ENCODE measurements at regions of chr10 and their contacts with region 1.

Region 1: GRCh38 chr10:101782811-101783735 is at the start of gene NPM3:
- DNase-seq: peak in 1 of 2 experiments; percentile 91
- H3K4me3 ChIP-seq: peak within 1 kb of the TSS; percentile 84 to 91 (median 88)
- H3K27ac ChIP-seq: peak within 1 kb of the TSS; percentile 50; the same call in 1 of the 2 replicates
- H3K4me1 ChIP-seq: peaks cover 4 to 33% (median 20%) of the 10 kb centered on the region in 4 experiments
- H3K27me3 ChIP-seq: peaks cover 5 to 18% (median 13%) of the 10 kb centered on the region in 4 experiments
- CTCF ChIP-seq: no peak
- EP300 ChIP-seq: no peak
- POLR2A ChIP-seq: peak in 1 of 2 experiments; percentile 67; a peak in 2 of 3 replicates
- RAD21 ChIP-seq: no peak
- total RNA-seq, gene NPM3: 175 and 177 TPM in 2 replicates

Region 2: GRCh38 chr10:101602761-101603398 is 180.2 kb before region 1 on chr10:
- CTCF ChIA-PET with region 1: interaction called, 246 read pairs
- POLR2A ChIA-PET with region 1: interaction called, 6 read pairs
- DNase-seq: peak; percentile 81 to 94
- H3K4me3 ChIP-seq: no peak overlapping the region
- H3K27ac ChIP-seq: no peak overlapping the region
- H3K4me1 ChIP-seq: peaks cover 2 to 9% (median 3%) of the 10 kb centered on the region in 4 experiments; a peak in 4 of 7 replicates
- H3K27me3 ChIP-seq: no peaks in the 10 kb centered on the region
- CTCF ChIP-seq: peak; percentile 93 to 100 (median 97)
- EP300 ChIP-seq: no peak
- POLR2A ChIP-seq: no peak
- RAD21 ChIP-seq: peak; percentile 98

Region 3: GRCh38 chr10:101663097-101663496 is 120.0 kb before region 1 on chr10:
- CTCF ChIA-PET with region 1: interaction called, 10 read pairs
- POLR2A ChIA-PET with region 1: no interaction called
- DNase-seq: no peak
- H3K4me3 ChIP-seq: no peak overlapping the region
- H3K27ac ChIP-seq: no peak overlapping the region
- H3K4me1 ChIP-seq: peaks cover 4 to 11% (median 7%) of the 10 kb centered on the region in 4 experiments; a peak in 6 of 7 replicates
- H3K27me3 ChIP-seq: no peaks in the 10 kb centered on the region; a peak in 1 of 7 replicates
- CTCF ChIP-seq: no peak
- EP300 ChIP-seq: no peak
- POLR2A ChIP-seq: no peak
- RAD21 ChIP-seq: no peak

Region 4: DNA sequence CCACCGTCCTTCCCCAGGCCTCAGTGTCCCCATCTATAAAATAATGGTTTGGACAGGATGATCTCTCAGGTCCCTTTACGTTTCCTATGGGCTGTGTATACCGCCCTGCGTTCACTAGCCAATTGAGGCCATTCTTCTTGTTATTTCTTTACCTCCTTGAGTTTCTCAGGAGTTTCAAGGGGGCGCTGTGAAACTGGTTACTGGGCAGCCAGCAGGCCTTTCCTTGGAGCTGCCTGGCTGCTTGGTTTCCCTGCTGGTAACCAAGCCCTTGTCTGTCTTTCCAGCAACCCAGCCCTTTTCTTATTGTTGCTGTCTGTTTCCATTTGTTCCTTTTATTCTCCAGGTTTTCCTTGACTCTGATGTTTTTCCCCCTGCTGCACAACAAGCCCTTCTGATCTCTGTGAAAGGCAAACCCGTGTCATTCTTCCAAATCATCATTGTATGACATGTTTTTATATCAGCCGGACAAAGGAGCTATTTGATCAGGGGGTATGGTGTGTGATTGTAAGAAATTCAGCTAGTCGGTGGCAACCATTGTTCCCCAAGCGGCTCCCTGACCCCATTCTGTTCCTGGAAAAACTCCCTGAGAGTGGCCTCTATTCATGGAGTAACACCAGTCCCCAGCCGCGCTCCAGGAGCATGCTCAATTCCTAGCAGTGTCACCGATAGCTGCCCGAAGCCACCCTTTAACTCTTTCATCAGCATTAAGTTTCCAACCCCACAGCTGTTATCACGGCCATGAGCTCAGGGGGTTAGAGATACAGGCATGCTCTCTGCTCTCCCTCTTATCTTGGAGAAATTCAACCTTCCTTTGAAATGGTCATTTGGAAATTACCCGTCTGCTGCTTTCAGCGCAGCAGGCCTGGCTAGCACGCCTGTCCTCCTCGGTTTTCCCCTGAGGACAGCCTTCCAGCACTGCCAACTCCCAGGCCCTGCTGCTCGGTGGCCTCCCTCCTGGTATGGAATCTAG is 33.7 kb before region 1 on chr10:
- CTCF ChIA-PET with region 1: interaction called, 11 read pairs
- POLR2A ChIA-PET with region 1: no interaction called
- DNase-seq: peak in 1 of 2 experiments; percentile 27
- H3K4me3 ChIP-seq: no peak overlapping the region
- H3K27ac ChIP-seq: no peak overlapping the region
- H3K4me1 ChIP-seq: peaks cover 0 to 6% (median 2%) of the 10 kb centered on the region in 4 experiments; a peak in 3 of 7 replicates
- H3K27me3 ChIP-seq: peaks cover 0 to 2% (median 0%) of the 10 kb centered on the region in 4 experiments; a peak in 1 of 7 replicates
- CTCF ChIP-seq: peak; percentile 40 to 70 (median 62)
- EP300 ChIP-seq: no peak
- POLR2A ChIP-seq: no peak
- RAD21 ChIP-seq: peak; percentile 49 to 69

Region 5: DNA sequence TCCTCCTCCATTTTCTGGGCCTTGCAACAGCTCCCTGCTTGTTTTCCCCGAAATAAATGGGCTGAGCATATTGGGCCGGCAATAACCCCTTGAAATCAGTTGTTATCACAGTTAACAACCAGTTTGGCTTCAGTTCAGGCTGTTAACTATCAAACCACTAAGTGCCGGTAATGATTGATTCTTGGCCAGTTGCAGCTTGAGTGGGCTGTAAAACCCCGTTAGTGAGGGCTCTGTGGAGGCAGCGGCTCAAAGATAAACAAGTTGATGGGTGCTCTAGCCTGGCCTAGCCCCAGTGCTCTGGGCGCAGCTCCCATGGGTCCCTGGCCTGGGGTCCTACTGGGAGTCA is 15.5 kb before region 1 on chr10:
- CTCF ChIA-PET with region 1: interaction called, 100 read pairs
- POLR2A ChIA-PET with region 1: interaction called, 13 read pairs
- DNase-seq: no peak
- H3K4me3 ChIP-seq: no peak overlapping the region
- H3K27ac ChIP-seq: no peak overlapping the region
- H3K4me1 ChIP-seq: peaks cover 2 to 9% (median 7%) of the 10 kb centered on the region in 4 experiments; a peak in 6 of 7 replicates
- H3K27me3 ChIP-seq: peaks cover 2 to 15% (median 12%) of the 10 kb centered on the region in 4 experiments
- CTCF ChIP-seq: no peak
- EP300 ChIP-seq: no peak
- POLR2A ChIP-seq: no peak
- RAD21 ChIP-seq: no peak

Region 6: DNA sequence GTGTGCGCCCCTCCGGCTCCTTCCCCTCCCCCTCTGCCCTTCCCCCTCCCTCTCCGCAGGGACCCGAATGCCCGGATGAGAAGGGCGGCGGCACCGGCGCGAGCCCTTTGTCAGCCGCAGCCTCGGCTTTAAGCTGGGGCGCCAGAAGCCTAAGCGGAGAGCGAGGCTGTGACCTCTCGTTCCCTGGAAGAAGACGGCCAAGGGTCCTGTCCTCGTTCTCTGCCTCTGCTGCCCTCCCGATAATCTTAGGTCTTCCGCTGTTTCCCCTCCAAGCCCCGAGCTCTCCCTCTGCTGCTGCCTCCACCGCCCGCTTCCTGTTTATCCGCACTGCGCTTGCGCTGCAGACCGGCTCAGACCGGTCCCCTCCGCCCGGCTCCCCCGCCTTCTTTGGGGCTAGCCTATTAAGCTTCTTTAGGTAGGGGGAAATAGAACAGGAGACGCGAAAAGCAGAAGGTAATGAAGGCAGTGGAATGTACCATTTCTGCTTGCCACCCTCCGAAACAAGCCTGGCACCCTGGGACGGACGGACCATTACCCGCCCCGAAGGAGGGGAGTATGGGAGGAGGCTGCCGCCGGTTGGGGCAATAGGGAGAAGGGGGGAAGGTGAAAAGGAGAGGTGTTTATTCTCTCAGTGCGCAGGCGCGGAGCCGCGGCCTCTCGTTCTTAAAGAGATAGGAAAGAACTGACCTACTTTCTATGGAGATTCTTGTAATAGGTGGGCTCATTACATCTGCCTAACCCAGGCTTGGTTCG is 35.2 kb after region 1 on chr10 and contains the start of gene OGA:
- CTCF ChIA-PET with region 1: interaction called, 13 read pairs
- POLR2A ChIA-PET with region 1: interaction called, 66 read pairs
- DNase-seq: peak; percentile 95 to 99
- H3K4me3 ChIP-seq: peak within 1 kb of the TSS; percentile 77 to 98 (median 90)
- H3K27ac ChIP-seq: peak within 1 kb of the TSS; percentile 100
- H3K4me1 ChIP-seq: peaks cover 0 to 5% (median 0%) of the 10 kb centered on the region in 4 experiments; a peak in 3 of 7 replicates
- H3K27me3 ChIP-seq: no peaks in the 10 kb centered on the region
- CTCF ChIP-seq: no peak
- EP300 ChIP-seq: peak in 1 of 2 experiments; percentile 100; a peak in 2 of 3 replicates
- POLR2A ChIP-seq: peak; percentile 83 to 88
- RAD21 ChIP-seq: no peak
- total RNA-seq, gene OGA: 104 and 107 TPM in 2 replicates

Measured in H1 (cell line).